Natural killer cell (primary cell): ENCODE measurements at regions of chr5 and their contacts with region 1.

Region 1: DNA sequence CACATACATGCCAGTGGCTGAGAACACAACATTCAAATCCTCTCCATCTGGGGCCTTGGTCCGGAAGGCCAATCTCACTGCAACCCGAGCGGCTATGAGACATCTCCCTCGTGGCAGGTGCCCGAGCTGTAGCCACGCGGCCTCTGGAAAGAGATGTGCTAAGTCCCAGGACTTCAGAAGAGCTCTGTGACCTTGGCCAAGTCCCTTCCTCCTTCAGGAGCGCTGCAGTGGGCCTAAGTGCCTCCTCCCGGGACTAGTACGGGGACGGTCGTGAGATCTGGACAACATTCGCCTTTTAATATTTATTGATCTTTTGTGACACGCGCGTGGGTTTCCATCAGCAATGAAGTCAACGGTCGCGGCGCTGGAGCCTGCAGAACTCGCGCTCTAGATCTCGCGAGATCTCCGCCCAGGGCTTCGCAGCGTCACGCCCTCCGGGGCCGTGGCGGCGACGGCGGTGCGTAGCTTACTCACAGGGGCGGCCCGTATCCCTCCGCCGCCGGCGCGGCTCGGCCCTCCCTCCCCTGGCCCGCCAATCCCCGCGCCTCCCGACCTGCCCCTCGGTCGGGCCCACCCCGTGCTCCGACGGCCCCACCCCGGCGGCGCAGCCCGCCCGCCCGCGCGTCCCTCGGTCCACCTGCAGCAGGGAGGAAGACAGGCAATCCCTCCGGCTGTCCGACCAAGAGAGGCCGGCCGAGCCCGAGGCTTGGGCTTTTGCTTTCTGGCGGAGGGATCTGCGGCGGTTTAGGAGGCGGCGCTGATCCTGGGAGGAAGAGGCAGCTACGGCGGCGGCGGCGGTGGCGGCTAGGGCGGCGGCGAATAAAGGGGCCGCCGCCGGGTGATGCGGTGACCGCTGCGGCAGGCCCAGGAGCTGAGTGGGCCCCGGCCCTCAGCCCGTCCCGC is at the start of gene UBE2D2:
- DNase-seq: peak; percentile 96 to 100
- ATAC-seq: peak; percentile 91 to 98 (median 92)
- H3K4me3 ChIP-seq: peak within 1 kb of the TSS; percentile 50
- H3K4me3 Mint-ChIP-seq: peak within 1 kb of the TSS; percentile 89
- H3K27ac ChIP-seq: peak within 1 kb of the TSS; percentile 78
- H3K27ac Mint-ChIP-seq: peak within 1 kb of the TSS; percentile 92 to 93
- H3K4me1 ChIP-seq: peaks cover 35% of the 10 kb centered on the region
- H3K4me1 Mint-ChIP-seq: peaks cover 32 to 34% of the 10 kb centered on the region in 2 donors
- H3K27me3 ChIP-seq: no peaks in the 10 kb centered on the region
- H3K27me3 Mint-ChIP-seq: no peaks in the 10 kb centered on the region
- CTCF ChIP-seq: no peak
- total RNA-seq, gene UBE2D2: 127 to 139 (median 131) TPM

Region 2: GRCh38 chr5:139696894-139697658 is 136.1 kb after region 1 on chr5:
- intact Hi-C with region 1: loop called (anchors 10 kb)
- DNase-seq: peak; percentile 37 to 49
- ATAC-seq: peak; percentile 24 to 75 (median 52)
- H3K4me3 ChIP-seq: peak overlapping the region; percentile 30
- H3K4me3 Mint-ChIP-seq: peak overlapping the region; percentile 91
- H3K27ac ChIP-seq: no peak overlapping the region
- H3K27ac Mint-ChIP-seq: peak overlapping the region; percentile 73 to 84
- H3K4me1 ChIP-seq: peaks cover 66% of the 10 kb centered on the region
- H3K4me1 Mint-ChIP-seq: peaks cover 49 to 57% of the 10 kb centered on the region in 2 donors
- H3K27me3 ChIP-seq: no peaks in the 10 kb centered on the region
- H3K27me3 Mint-ChIP-seq: no peaks in the 10 kb centered on the region
- CTCF ChIP-seq: no peak